CD8-positive, alpha-beta T cell (primary cell): ENCODE measurements at regions of chr2 and their contacts with region 1.

Region 1: GRCh38 chr2:172215172-172215935 is 112.7 kb upstream of the DLX2 start:
- DNase-seq: no peak
- ATAC-seq: no peak
- H3K4me3 ChIP-seq: no peak overlapping the region
- H3K4me3 Mint-ChIP-seq: no peak overlapping the region
- H3K27ac ChIP-seq: no peak overlapping the region
- H3K27ac Mint-ChIP-seq: peak overlapping the region; percentile 22
- H3K4me1 ChIP-seq: peaks cover 20% of the 10 kb centered on the region
- H3K4me1 Mint-ChIP-seq: peaks cover 28% of the 10 kb centered on the region
- H3K27me3 ChIP-seq: no peaks in the 10 kb centered on the region
- H3K27me3 Mint-ChIP-seq: no peaks in the 10 kb centered on the region
- CTCF ChIP-seq: no peak

Region 2: DNA sequence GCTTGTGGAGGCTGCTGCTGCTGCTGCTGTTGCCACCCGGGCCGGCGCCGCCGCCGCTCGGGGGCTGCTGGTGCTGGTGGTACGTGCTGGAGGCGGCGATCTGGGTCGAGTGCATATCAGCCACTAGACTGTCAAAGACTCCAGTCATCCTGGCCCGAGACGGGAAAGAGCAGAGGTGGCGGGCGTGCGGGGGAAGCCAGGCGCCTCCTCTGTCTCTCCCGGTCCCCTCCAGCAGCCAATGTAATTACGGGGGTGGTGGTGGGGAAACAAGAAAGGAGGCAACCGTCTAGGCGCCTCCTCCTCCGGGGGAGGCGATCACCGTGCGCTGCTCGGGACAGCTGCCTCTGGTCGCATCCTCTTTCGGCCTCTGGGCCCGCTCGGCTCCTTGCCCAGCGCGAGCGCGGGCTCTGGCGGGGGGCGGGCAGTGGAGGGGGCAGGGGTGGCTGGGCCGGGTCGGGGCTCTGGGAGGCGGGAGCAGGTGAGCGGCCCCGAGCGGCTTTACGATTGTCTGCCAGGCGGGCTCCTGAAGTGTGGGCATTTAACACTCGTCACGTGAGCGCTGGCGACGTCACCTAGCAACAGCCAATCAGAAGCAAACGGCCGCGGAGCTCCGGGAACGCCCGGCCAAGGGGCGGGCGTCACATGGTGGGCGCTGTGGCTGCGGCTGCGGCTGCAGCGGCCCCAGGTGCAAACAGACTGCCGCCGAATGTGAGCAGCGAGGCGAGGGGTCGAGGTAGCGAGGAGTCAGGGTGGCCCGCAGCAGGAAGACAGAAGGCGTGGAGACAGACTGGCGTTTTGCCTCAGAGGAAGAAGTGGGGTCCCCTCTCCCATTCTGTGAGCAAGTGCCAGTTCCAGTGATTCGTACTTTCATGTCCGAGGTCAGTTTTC is 112.7 kb before region 1 on chr2 and contains the start of gene DLX2:
- CTCF ChIA-PET with region 1: no interaction called
- POLR2A ChIA-PET with region 1: no interaction called
- intact Hi-C with region 1: no loop called
- DNase-seq: peak in 8 of 9 experiments; percentile 42 to 85 (median 66)
- ATAC-seq: peak; percentile 24
- H3K4me3 ChIP-seq: peak within 1 kb of the TSS; percentile 46 to 57
- H3K4me3 Mint-ChIP-seq: peak within 1 kb of the TSS; percentile 80
- H3K27ac ChIP-seq: no peak within 1 kb of the TSS
- H3K27ac Mint-ChIP-seq: no peak within 1 kb of the TSS
- H3K4me1 ChIP-seq: peaks cover 76% of the 10 kb centered on the region
- H3K4me1 Mint-ChIP-seq: peaks cover 46% of the 10 kb centered on the region
- H3K27me3 ChIP-seq: peaks cover 86 to 89% of the 10 kb centered on the region in 2 experiments
- H3K27me3 Mint-ChIP-seq: peaks cover 62% of the 10 kb centered on the region
- CTCF ChIP-seq: no peak
- total RNA-seq, gene DLX2: 0.14 TPM in 1 of 2 experiments, not detected in the other

Region 3: DNA sequence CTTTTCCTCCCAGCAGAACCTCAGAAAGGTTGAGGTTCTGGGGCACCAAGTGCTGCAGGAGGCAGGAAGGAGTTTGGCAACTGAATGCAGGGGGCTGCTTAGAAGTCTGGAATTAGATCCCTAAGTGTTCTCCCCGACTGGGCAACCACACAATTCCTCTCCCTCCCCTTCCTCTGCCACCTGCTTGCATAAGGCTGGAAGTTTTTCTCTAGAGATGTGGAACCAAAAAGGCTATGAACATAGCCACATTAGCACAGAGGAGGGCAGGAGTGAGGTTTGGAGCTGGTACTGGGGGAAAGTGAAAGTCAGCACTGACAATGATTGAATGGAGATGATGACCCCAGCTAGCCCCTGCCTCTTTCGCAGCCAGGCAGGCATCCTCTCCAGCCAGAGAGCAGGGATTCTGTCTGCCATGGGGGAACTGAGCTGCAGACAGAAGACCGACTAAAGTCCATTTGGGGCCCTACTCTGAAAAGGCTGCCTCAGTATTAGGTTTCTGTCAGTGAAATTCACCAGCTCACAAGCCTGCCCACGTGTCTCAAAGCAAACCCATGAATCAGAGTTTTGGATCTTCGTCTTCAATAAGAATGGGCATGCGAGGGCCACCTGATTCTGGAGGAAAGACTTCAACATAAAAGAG is 124.1 kb after region 1 on chr2:
- CTCF ChIA-PET with region 1: no interaction called
- POLR2A ChIA-PET with region 1: no interaction called
- intact Hi-C with region 1: loop called in 1 of 2 experiments (anchors 10 kb)
- DNase-seq: peak in 3 of 9 experiments; percentile 22 to 36 (median 23)
- ATAC-seq: peak; percentile 61
- H3K4me3 ChIP-seq: no peak overlapping the region
- H3K4me3 Mint-ChIP-seq: peak overlapping the region; percentile 76
- H3K27ac ChIP-seq: no peak overlapping the region
- H3K27ac Mint-ChIP-seq: no peak overlapping the region
- H3K4me1 ChIP-seq: peaks cover 17% of the 10 kb centered on the region
- H3K4me1 Mint-ChIP-seq: peaks cover 28% of the 10 kb centered on the region
- H3K27me3 ChIP-seq: no peaks in the 10 kb centered on the region
- H3K27me3 Mint-ChIP-seq: no peaks in the 10 kb centered on the region
- CTCF ChIP-seq: no peak